Posterior vena cava (tissue), 2 donors: ENCODE measurements at regions of chr12 and their contacts with region 1.

Region 1: GRCh38 chr12:55619354-55620138 is 17.1 kb upstream of the OR10P1 start:
- DNase-seq: no peak

Region 2: DNA sequence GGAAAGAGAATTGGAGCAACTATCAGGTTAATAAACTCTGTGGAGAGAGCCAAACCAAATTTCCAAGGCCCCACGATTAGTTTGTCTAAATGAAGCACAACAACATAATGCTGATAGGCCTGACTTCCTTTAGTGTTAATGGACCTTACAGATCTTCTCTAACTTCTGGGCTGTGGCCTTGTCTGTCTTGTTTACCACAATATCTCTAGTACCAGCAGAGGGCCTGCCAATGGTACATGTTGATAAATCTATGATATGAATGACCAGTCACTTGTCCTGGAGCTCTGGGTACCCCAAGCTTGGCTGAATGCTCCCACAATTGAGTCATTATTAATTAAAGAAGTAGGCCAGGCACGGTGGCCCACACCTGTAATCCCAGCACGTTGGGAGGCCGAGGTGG is 1788.9 kb before region 1 on chr12:
- intact Hi-C with region 1: no loop called
- DNase-seq: no peak

Region 3: DNA sequence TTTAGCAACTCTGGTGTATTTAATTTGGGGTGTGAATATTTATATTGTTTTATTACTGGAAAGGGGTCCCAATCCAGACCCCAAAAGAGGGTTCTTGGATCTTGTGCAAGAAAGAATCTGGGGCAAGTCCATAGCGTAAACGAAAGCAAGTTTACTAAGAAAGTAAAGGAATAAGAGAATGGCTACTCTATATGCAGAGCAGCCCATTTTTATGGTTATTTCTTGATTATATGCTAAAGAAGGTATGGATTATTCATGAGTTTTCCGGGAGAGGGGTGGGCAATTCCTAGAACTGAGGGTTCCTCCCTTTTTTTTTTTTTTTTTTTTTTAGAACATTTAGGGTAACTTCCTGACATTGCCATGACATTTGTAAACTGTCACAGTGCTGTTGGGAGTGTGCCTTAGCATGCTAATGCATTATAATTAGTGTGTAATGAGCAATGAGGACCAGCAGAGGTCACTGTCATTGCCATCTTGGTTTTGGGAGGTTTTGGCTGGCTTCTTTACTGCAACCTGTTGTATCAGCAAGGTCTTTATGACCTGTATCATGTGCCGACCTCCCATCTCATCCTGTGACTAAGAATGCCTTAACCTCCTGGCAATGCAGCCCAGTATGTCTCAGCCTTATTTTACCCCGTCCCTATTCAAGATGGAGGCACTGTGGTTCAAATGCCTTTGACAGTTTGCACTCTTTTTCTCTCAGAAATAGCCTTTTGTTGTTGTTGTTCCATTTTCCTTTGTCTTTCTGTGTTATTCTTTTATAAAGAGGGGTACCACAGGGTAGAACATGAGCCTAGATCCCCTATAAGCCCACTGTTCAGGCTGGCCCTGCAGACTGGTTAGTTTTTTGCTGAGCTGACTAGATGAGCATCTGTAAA is 895.9 kb before region 1 on chr12:
- intact Hi-C with region 1: loop called in 1 of 2 experiments (anchors 10 kb)
- DNase-seq: no peak

Region 4: GRCh38 chr12:55188974-55189556 is 430.5 kb before region 1 on chr12:
- intact Hi-C with region 1: loop called (anchors 10 kb)
- DNase-seq: no peak

Region 5: GRCh38 chr12:55194382-55194781 is 425.2 kb before region 1 on chr12:
- intact Hi-C with region 1: loop called (anchors 10 kb)
- DNase-seq: no peak

Region 6: GRCh38 chr12:55996715-55997534 is 377.4 kb after region 1 on chr12 and contains the start of gene SUOX:
- intact Hi-C with region 1: no loop called
- DNase-seq: peak; percentile 99
- total RNA-seq, gene SUOX: 15.0 to 15.9 TPM